HepG2 (cell line): ENCODE measurements at regions of chr5 and their contacts with region 1.

Region 1: GRCh38 chr5:133111299-133111698 is 59.5 kb downstream of the HSPA4 start:
- DNase-seq: peak; percentile 59
- ATAC-seq: peak; percentile 69
- H3K4me3 ChIP-seq: no peak overlapping the region
- H3K27ac ChIP-seq: no peak overlapping the region
- H3K4me1 ChIP-seq: peaks cover 31% of the 10 kb centered on the region
- H3K27me3 ChIP-seq: peaks cover 3 to 31% of the 10 kb centered on the region in 2 experiments; a peak in 4 of 5 replicates
- CTCF ChIP-seq: peak; percentile 95
- EP300 ChIP-seq: no peak
- POLR2A ChIP-seq: no peak
- RAD21 ChIP-seq: peak; percentile 90

Region 2: DNA sequence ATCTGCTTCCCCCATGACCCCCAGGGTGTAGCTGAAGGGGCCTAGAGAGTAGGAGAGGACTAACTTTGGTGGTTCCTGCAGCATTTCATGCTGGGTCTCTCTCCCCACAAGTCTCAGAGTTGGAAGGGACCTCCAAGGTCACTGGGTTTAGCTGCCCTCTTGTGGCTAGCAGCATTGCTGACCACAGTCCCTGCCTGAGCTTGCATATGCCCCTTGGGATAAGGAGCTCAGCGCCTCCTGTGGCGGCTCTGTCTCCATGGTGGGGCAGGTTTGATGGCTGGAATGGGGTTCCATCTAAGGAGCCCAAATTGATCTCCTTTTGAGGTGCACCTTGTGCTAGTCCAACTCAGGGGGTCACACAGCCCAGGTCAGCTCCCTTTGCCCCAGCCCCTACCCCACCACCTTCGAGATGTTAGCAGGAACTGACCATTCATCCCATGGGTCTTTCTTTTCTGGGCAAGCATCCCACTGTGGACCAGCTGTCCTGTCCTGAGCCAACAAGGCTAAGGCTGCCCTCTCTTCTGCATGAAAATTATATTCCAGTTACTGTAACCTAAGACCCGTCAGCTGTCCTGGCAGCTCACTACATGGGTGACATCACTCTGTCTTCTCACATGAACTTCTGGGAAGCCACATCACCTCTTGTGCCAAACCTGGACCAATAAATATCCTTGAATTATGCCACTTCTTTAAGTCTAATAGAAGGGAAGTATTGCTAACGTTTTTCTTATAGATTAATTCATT is 136.8 kb after region 1 on chr5:
- CTCF ChIA-PET with region 1: interaction called, 25 read pairs
- POLR2A ChIA-PET with region 1: no interaction called
- in situ Hi-C with region 1: loop called (anchors 5 kb)
- intact Hi-C with region 1: loop called (anchors 1 kb)
- DNase-seq: peak; percentile 74
- ATAC-seq: peak; percentile 81
- H3K4me3 ChIP-seq: no peak overlapping the region
- H3K27ac ChIP-seq: no peak overlapping the region
- H3K4me1 ChIP-seq: peaks cover 66% of the 10 kb centered on the region
- H3K27me3 ChIP-seq: no peaks in the 10 kb centered on the region
- CTCF ChIP-seq: peak; percentile 88
- EP300 ChIP-seq: no peak
- POLR2A ChIP-seq: no peak
- RAD21 ChIP-seq: peak; percentile 80

Region 3: DNA sequence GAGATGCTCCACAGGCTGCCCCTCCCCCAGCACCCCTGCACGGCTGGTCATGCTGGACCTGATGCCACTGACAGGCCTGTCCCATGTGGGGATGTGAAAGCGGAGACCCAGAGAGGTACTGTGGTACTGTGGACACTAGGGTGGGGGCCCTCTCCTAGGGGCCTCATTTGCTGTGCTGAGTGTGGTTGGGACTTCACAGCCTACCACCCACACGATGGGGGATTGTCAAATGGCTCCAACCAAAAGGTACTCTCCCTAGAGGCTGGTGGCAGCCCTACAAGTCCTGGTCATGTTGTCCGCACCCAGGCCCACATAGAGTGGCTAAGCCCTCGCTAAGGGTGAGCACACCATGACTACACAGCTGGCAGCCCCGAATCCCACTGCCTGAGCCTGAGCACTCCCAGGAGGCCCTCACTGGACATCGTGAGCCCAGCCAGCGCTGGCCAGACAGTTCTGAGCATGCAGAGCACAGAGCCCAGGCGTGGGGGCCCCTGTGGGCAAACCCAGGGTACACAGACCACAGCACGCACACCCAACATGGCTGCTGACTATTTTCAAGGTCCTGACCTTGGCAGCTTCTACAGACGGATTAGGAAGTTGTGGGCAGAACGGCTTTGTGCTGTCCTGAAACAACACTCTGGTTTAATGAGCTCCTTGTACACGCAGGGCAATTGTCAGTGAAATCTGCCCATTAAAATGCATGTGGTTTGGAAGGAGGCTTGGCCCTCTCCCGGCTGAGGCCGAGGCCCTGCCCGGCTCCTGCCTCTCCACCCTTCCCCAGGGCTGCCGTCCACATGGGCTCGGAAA is 154.6 kb after region 1 on chr5:
- CTCF ChIA-PET with region 1: interaction called, 4 read pairs
- POLR2A ChIA-PET with region 1: no interaction called
- in situ Hi-C with region 1: no loop called
- intact Hi-C with region 1: loop called (anchors 5 kb)
- DNase-seq: peak; percentile 22
- ATAC-seq: peak; percentile 74
- H3K4me3 ChIP-seq: peak overlapping the region; percentile 16 to 45 (median 28)
- H3K27ac ChIP-seq: no peak overlapping the region
- H3K4me1 ChIP-seq: peaks cover 27% of the 10 kb centered on the region
- H3K27me3 ChIP-seq: peaks cover 1 to 20% of the 10 kb centered on the region in 2 experiments; a peak in 2 of 5 replicates
- CTCF ChIP-seq: no peak
- EP300 ChIP-seq: no peak
- POLR2A ChIP-seq: no peak
- RAD21 ChIP-seq: no peak

Region 4: DNA sequence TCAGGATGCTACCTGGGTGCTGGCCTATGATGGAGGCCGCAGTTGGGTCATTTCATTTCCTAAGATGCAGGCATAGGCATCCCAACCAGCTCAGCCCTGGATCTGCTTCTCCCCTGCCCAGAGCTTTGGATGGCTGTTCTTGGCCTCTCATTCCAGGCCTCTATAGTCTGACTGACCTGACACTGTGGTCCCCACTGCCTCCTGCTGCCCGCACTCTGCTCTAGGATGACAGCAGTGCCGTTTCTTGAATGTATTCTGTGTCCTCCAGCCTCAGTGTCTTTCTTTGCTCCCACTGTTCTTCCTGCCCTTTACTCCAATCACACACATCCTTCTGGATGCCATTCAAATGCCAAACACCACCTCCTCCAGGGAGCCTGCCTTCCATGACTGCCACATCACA is 176.2 kb after region 1 on chr5:
- CTCF ChIA-PET with region 1: interaction called, 28 read pairs
- POLR2A ChIA-PET with region 1: no interaction called
- in situ Hi-C with region 1: loop called (anchors 5 kb)
- intact Hi-C with region 1: no loop called
- DNase-seq: peak; percentile 12
- ATAC-seq: peak; percentile 82
- H3K4me3 ChIP-seq: no peak overlapping the region
- H3K27ac ChIP-seq: no peak overlapping the region
- H3K4me1 ChIP-seq: peaks cover 8% of the 10 kb centered on the region; the same call in 1 of the 2 replicates
- H3K27me3 ChIP-seq: peaks cover 0 to 5% of the 10 kb centered on the region in 2 experiments; a peak in 4 of 5 replicates
- CTCF ChIP-seq: peak; percentile 83
- EP300 ChIP-seq: no peak
- POLR2A ChIP-seq: no peak
- RAD21 ChIP-seq: peak; percentile 50

Region 5: GRCh38 chr5:133460172-133460758 is 349.0 kb after region 1 on chr5:
- CTCF ChIA-PET with region 1: no interaction called
- POLR2A ChIA-PET with region 1: no interaction called
- in situ Hi-C with region 1: no loop called
- intact Hi-C with region 1: loop called (anchors 5 kb)
- DNase-seq: no peak
- ATAC-seq: peak; percentile 73
- H3K4me3 ChIP-seq: no peak overlapping the region
- H3K27ac ChIP-seq: no peak overlapping the region
- H3K4me1 ChIP-seq: no peaks in the 10 kb centered on the region
- H3K27me3 ChIP-seq: peaks cover 0 to 3% of the 10 kb centered on the region in 2 experiments; a peak in 1 of 5 replicates
- CTCF ChIP-seq: peak; percentile 71
- EP300 ChIP-seq: no peak
- POLR2A ChIP-seq: no peak
- RAD21 ChIP-seq: peak; percentile 35; the same call in 1 of the 2 replicates